IMR-90 (cell line): ENCODE measurements at regions of chr1 and their contacts with region 1.

Region 1: GRCh38 chr1:70221241-70222121 is at the start of gene SRSF11:
- DNase-seq: peak; percentile 91
- ATAC-seq: peak; percentile 99
- H3K4me3 ChIP-seq: peak within 1 kb of the TSS; percentile 97
- H3K27ac ChIP-seq: peak within 1 kb of the TSS; percentile 98
- H3K4me1 ChIP-seq: peaks cover 2% of the 10 kb centered on the region
- H3K27me3 ChIP-seq: no peaks in the 10 kb centered on the region
- CTCF ChIP-seq: no peak
- POLR2A ChIP-seq: peak; percentile 76
- RAD21 ChIP-seq: no peak
- total RNA-seq, gene SRSF11: 94.5 and 116 TPM in 2 replicates

Region 2: DNA sequence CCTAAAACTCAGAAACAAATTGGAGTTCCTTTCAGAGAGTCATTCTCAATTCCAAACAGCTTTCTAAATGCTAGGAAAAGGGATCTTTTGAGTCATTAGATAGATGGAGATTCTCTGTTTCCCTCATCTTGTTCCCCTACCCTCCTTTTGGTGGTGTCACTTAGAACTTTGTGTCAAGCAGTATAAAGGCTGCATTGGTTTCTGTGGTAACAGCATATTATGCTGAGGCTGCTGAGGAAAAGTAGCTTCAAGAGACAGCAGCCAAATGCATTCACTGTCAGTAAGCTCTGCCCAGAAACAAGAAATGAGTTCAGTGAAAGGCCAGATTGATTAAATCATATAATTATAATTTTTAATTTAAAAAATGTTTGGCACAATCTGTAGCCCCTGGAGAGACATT is 160.2 kb before region 1 on chr1:
- CTCF ChIA-PET with region 1: no interaction called
- POLR2A ChIA-PET with region 1: no interaction called
- dilution Hi-C with region 1: no loop called
- in situ Hi-C with region 1: no loop called
- intact Hi-C with region 1: no loop called
- DNase-seq: no peak
- ATAC-seq: no peak
- H3K4me3 ChIP-seq: no peak overlapping the region
- H3K27ac ChIP-seq: no peak overlapping the region
- H3K4me1 ChIP-seq: no peaks in the 10 kb centered on the region
- H3K27me3 ChIP-seq: no peaks in the 10 kb centered on the region
- CTCF ChIP-seq: no peak
- POLR2A ChIP-seq: no peak
- RAD21 ChIP-seq: no peak

Region 3: GRCh38 chr1:70205434-70206118 is 15.9 kb before region 1 on chr1 and contains the start of gene LRRC40:
- CTCF ChIA-PET with region 1: no interaction called
- POLR2A ChIA-PET with region 1: interaction called, 3 read pairs
- dilution Hi-C with region 1: no loop called
- in situ Hi-C with region 1: no loop called
- intact Hi-C with region 1: loop called (anchors 2 kb)
- DNase-seq: peak; percentile 94
- ATAC-seq: peak; percentile 99
- H3K4me3 ChIP-seq: peak within 1 kb of the TSS; percentile 81
- H3K27ac ChIP-seq: peak within 1 kb of the TSS; percentile 89
- H3K4me1 ChIP-seq: peaks cover 1% of the 10 kb centered on the region
- H3K27me3 ChIP-seq: no peaks in the 10 kb centered on the region
- CTCF ChIP-seq: no peak
- POLR2A ChIP-seq: peak; percentile 89
- RAD21 ChIP-seq: no peak
- total RNA-seq, gene LRRC40: 17.4 and 28.1 TPM in 2 replicates